Natural killer cell (primary cell): ENCODE measurements at regions of chr19 and their contacts with region 1.

Region 1: DNA sequence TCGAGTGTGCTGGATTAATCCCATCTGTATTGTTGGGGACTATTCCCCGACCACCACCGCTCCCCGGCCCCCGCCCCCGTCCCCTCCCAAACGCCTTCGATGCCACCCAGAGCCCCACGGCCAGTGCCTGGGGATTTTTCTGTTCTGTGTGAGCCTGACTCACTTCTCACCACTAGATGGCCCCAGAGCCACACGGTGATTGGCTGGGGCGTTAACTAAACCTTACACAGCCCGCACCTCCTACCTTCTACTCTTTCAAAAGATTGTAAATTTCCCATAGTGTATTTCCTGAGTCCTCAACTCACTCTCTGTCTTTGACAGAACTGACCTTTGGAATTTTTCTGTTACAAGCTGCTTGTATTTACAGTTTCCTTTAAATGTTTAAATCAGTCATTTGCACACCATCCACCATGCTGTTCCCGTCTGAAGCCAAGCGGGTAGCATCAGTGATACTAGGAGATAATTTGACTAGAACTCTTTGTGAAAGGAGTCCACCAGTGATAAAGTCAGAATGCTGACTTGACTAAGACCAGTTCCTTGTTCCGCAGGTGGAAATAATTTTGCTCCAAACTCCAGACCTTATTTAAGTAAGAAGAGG is 61.4 kb downstream of the RFX2 start:
- DNase-seq: peak; percentile 65 to 91
- ATAC-seq: peak; percentile 95 to 100 (median 100)
- H3K4me3 ChIP-seq: no peak overlapping the region
- H3K4me3 Mint-ChIP-seq: no peak overlapping the region
- H3K27ac ChIP-seq: no peak overlapping the region
- H3K27ac Mint-ChIP-seq: no peak overlapping the region
- H3K4me1 ChIP-seq: no peaks in the 10 kb centered on the region
- H3K4me1 Mint-ChIP-seq: peaks cover 5 to 7% of the 10 kb centered on the region in 2 donors
- H3K27me3 ChIP-seq: no peaks in the 10 kb centered on the region
- H3K27me3 Mint-ChIP-seq: peaks cover 9 to 10% of the 10 kb centered on the region in 2 donors
- CTCF ChIP-seq: peak; percentile 81

Region 2: DNA sequence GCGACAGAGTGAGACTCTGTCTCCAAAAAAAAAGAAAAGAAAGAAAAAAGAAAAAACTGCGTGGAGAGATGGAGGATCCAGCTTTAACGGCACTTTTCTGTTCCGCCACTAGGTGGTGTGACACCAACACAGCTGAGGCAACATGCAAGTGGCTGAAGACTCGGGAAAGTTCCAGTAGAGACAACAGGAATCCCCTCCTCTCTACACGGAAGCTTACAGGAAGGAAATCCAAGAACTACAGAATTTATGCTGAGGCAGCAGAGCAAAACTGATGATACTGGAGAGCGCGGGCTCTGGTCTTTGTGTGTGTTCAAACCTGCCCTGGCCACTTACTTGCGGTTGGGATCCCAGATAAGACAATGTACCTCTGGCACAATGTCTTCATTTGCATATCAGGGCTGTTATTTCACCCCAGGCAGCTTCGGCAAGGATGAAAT is 80.9 kb before region 1 on chr19:
- intact Hi-C with region 1: no loop called
- DNase-seq: peak; percentile 31 to 85
- ATAC-seq: peak; percentile 76 to 89 (median 78)
- H3K4me3 ChIP-seq: no peak overlapping the region
- H3K4me3 Mint-ChIP-seq: no peak overlapping the region
- H3K27ac ChIP-seq: no peak overlapping the region
- H3K27ac Mint-ChIP-seq: peak overlapping the region; percentile 46 to 64
- H3K4me1 ChIP-seq: peaks cover 52% of the 10 kb centered on the region
- H3K4me1 Mint-ChIP-seq: peaks cover 53 to 86% of the 10 kb centered on the region in 2 donors
- H3K27me3 ChIP-seq: no peaks in the 10 kb centered on the region
- H3K27me3 Mint-ChIP-seq: no peaks in the 10 kb centered on the region
- CTCF ChIP-seq: peak; percentile 79

Region 3: DNA sequence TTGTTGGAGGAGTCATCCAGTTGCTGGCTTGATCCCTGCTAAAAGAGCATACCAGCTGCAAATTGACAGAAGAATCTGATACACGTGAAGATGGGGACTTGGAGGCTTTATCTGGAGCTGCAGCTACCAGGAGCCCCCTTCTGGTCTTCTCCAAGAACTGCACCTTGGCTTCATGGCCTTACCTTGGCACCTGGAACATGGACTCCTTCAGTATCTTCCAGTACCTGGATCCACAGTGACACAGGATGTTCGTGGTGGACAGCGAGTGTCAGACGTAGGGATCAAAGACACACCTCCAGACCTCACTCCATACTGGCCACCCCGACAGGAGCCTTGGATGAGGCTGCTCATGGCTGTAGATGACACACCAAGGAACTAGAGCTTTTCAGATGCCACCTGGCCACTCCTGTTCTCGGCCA is 76.7 kb after region 1 on chr19:
- intact Hi-C with region 1: loop called (anchors 1 kb)
- DNase-seq: peak; percentile 39 to 88
- ATAC-seq: peak; percentile 83 to 97 (median 89)
- H3K4me3 ChIP-seq: no peak overlapping the region
- H3K4me3 Mint-ChIP-seq: no peak overlapping the region
- H3K27ac ChIP-seq: no peak overlapping the region
- H3K27ac Mint-ChIP-seq: no peak overlapping the region
- H3K4me1 ChIP-seq: no peaks in the 10 kb centered on the region
- H3K4me1 Mint-ChIP-seq: no peaks in the 10 kb centered on the region
- H3K27me3 ChIP-seq: no peaks in the 10 kb centered on the region
- H3K27me3 Mint-ChIP-seq: peaks cover 3 to 8% of the 10 kb centered on the region in 2 donors
- CTCF ChIP-seq: peak; percentile 93